Activated CD4-positive, alpha-beta memory T cell treated with anti-CD3 and anti-CD28 coated beads, Interleukin-2, amount 10 ng/mL, durations not matched to agents 7 days and 5 days (primary cell): ENCODE measurements at regions of chr1 and their contacts with region 1.

Region 1: DNA sequence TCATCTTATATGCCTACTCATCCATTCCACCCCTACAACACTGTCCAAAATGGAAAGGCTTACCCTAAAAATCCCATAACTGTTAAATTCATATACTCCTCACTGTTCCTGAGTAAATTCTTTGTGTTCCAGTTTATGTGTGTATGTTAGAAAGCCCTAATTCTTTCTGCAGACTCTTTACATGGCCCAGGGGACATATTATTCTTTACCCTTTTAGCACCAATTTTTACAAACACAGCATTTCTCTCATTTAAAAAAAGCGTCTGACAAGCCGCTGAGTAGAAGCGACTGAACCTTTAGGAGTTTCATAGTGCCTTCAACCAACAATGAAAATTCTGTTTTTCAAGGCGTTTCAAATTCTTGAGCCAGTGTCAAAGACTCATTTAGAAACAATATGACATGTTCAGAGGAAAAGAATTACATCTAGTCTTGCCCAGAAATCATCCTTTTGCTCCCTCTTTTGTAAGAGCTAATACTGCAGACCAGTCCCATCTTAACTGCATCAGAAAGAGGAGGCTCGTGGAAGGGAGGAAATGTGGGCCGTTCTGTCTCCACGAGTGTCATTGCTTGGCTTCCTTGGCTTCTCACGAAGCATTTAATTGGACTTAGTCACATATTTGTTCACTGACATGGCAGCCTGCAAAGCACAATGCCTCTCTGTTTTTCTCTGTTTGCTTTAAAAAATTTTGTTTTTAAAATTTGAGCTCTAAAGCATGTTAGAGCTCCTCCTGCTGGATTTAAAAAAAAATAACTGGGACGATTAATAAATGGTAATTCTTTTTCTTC is 21.3 kb upstream of the C1orf105 start:
- DNase-seq: no peak
- H3K4me3 Mint-ChIP-seq: no peak overlapping the region
- H3K27ac Mint-ChIP-seq: no peak overlapping the region
- H3K4me1 Mint-ChIP-seq: peaks cover 48% of the 10 kb centered on the region
- H3K27me3 Mint-ChIP-seq: peaks cover 3% of the 10 kb centered on the region

Region 2: GRCh38 chr1:172002725-172003345 is 396.3 kb before region 1 on chr1:
- CTCF ChIA-PET with region 1: interaction called, 27 read pairs
- POLR2A ChIA-PET with region 1: no interaction called
- DNase-seq: no peak
- H3K4me3 Mint-ChIP-seq: no peak overlapping the region
- H3K27ac Mint-ChIP-seq: no peak overlapping the region
- H3K4me1 Mint-ChIP-seq: no peaks in the 10 kb centered on the region
- H3K27me3 Mint-ChIP-seq: no peaks in the 10 kb centered on the region

Region 3: DNA sequence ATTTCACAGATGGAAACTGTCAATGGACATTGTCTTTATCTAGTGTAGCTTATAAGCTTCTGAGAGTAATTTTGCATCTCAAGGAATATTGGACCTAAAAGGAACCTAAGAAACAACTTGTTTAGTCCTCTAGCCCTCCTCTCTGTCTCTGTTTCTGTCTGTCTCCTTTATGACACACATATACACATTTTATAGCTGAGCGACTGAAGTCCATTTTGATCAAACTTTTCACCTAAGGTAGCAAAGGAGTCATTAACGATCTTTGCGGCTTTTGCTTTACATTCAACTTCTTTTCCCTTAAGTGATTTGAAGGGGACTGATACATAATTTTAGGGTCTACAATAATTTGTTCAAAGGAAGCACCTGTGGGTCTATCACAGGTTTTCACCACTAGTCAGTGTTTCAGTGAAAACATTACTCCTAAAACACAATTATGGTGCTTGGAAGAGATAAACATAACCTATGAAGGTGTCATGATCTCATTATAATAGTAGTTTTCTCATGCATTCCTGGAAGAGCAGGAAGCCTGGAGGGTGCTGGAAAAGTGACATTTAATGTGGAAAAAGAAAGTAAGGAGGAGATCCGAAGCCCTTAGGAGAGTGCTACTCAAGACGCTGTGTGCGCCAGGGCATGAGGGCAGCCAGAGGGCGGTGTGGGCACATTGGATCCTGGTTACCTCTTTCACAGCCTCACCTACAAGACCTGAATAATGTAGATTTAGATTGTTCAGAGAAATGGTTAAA is 309.2 kb before region 1 on chr1:
- CTCF ChIA-PET with region 1: interaction called, 25 read pairs
- POLR2A ChIA-PET with region 1: no interaction called
- DNase-seq: peak; percentile 69
- H3K4me3 Mint-ChIP-seq: no peak overlapping the region
- H3K27ac Mint-ChIP-seq: no peak overlapping the region
- H3K4me1 Mint-ChIP-seq: peaks cover 4% of the 10 kb centered on the region
- H3K27me3 Mint-ChIP-seq: no peaks in the 10 kb centered on the region

Region 4: GRCh38 chr1:172308577-172308976 is 90.6 kb before region 1 on chr1:
- CTCF ChIA-PET with region 1: no interaction called
- POLR2A ChIA-PET with region 1: no interaction called
- DNase-seq: no peak
- H3K4me3 Mint-ChIP-seq: no peak overlapping the region
- H3K27ac Mint-ChIP-seq: no peak overlapping the region
- H3K4me1 Mint-ChIP-seq: peaks cover 3% of the 10 kb centered on the region
- H3K27me3 Mint-ChIP-seq: no peaks in the 10 kb centered on the region

Region 5: GRCh38 chr1:172357753-172358385 is 41.3 kb before region 1 on chr1:
- CTCF ChIA-PET with region 1: interaction called, 6 read pairs
- POLR2A ChIA-PET with region 1: interaction called, 13 read pairs
- DNase-seq: no peak
- H3K4me3 Mint-ChIP-seq: no peak overlapping the region
- H3K27ac Mint-ChIP-seq: peak overlapping the region; percentile 70
- H3K4me1 Mint-ChIP-seq: peaks cover 50% of the 10 kb centered on the region
- H3K27me3 Mint-ChIP-seq: peaks cover 5% of the 10 kb centered on the region

Region 6: GRCh38 chr1:172380441-172381244 is 18.5 kb before region 1 on chr1:
- CTCF ChIA-PET with region 1: interaction called, 4 read pairs
- POLR2A ChIA-PET with region 1: interaction called, 17 read pairs
- DNase-seq: peak; percentile 21
- H3K4me3 Mint-ChIP-seq: peak overlapping the region; percentile 59
- H3K27ac Mint-ChIP-seq: peak overlapping the region; percentile 78
- H3K4me1 Mint-ChIP-seq: peaks cover 17% of the 10 kb centered on the region
- H3K27me3 Mint-ChIP-seq: peaks cover 3% of the 10 kb centered on the region